ENCODE measurements at regions of chr3 and their contacts with region 1.

Region 1: GRCh38 chr3:64342940-64343688 is 117.8 kb upstream of the PRICKLE2 start:
- DNase-seq: no peak
- H3K4me3 ChIP-seq: no peak overlapping the region
- H3K27ac ChIP-seq: peak overlapping the region; percentile 76 to 90 (median 85)
- H3K4me1 ChIP-seq: peaks cover 0 to 60% (median 56%) of the 10 kb centered on the region in 4 donors
- H3K27me3 ChIP-seq: no peaks in the 10 kb centered on the region
- CTCF ChIP-seq: no peak
- EP300 ChIP-seq: no peak
- POLR2A ChIP-seq: no peak

Region 2: GRCh38 chr3:64150623-64151207 is 192.4 kb before region 1 on chr3:
- intact Hi-C with region 1: loop called (anchors 5 kb)
- DNase-seq: peak; percentile 92
- H3K4me3 ChIP-seq: no peak overlapping the region
- H3K27ac ChIP-seq: peak overlapping the region; percentile 84 to 96 (median 87)
- H3K4me1 ChIP-seq: peaks cover 0 to 60% (median 46%) of the 10 kb centered on the region in 4 donors
- H3K27me3 ChIP-seq: no peaks in the 10 kb centered on the region
- CTCF ChIP-seq: no peak
- EP300 ChIP-seq: peak; percentile 55 to 91 (median 75)
- POLR2A ChIP-seq: no peak